Vagina (tissue), 2 donors: ENCODE measurements at regions of chr12 and their contacts with region 1.

Region 1: GRCh38 chr12:91326058-91327027 is 143.7 kb upstream of the DCN start:
- DNase-seq: no peak
- H3K4me3 ChIP-seq: no peak overlapping the region
- H3K27ac ChIP-seq: peak overlapping the region; percentile 78
- H3K4me1 ChIP-seq: peaks cover 20% of the 10 kb centered on the region
- H3K27me3 ChIP-seq: no peaks in the 10 kb centered on the region
- CTCF ChIP-seq: peak; percentile 19 to 70 (median 69)
- POLR2A ChIP-seq: no peak

Region 2: GRCh38 chr12:90978117-90978770 is 348.1 kb before region 1 on chr12:
- intact Hi-C with region 1: loop called (anchors 10 kb)
- DNase-seq: no peak
- H3K4me3 ChIP-seq: no peak overlapping the region
- H3K27ac ChIP-seq: peak overlapping the region; percentile 14
- H3K4me1 ChIP-seq: no peaks in the 10 kb centered on the region
- H3K27me3 ChIP-seq: no peaks in the 10 kb centered on the region
- CTCF ChIP-seq: peak; percentile 65 to 81 (median 69)
- POLR2A ChIP-seq: no peak

Region 3: DNA sequence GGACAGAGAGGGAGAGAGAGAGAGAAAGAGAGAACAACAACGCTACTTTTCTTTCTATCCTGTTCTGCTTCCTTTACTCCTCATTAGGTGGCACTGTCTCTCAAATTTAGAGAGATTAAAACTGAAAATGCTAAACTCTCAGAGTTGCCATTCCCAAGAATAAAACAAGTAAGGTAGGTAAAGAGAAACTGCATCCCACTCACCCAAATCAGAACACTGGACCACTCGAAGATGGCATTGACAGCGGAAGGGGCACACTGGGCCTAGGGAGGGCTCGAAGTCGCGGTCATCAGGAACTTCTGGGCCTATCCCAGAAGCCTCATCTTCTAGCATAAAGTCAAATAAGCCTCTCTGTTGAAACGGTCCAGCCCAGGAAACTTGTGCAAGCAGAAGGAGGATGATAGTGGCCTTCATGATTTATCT is 148.2 kb before region 1 on chr12:
- intact Hi-C with region 1: loop called (anchors 10 kb)
- DNase-seq: no peak
- H3K4me3 ChIP-seq: peak overlapping the region; percentile 44 to 51
- H3K27ac ChIP-seq: peak overlapping the region; percentile 93
- H3K4me1 ChIP-seq: peaks cover 4% of the 10 kb centered on the region
- H3K27me3 ChIP-seq: no peaks in the 10 kb centered on the region
- CTCF ChIP-seq: peak in 2 of 3 experiments; percentile 55 to 56
- POLR2A ChIP-seq: no peak

Region 4: GRCh38 chr12:91413581-91414546 is 87.5 kb after region 1 on chr12:
- intact Hi-C with region 1: no loop called
- DNase-seq: no peak
- H3K4me3 ChIP-seq: no peak overlapping the region
- H3K27ac ChIP-seq: no peak overlapping the region
- H3K4me1 ChIP-seq: peaks cover 13% of the 10 kb centered on the region
- H3K27me3 ChIP-seq: no peaks in the 10 kb centered on the region
- CTCF ChIP-seq: no peak
- POLR2A ChIP-seq: no peak